Gastrocnemius medialis (tissue), 4 donors: ENCODE measurements at regions of chr18 and their contacts with region 1.

Region 1: DNA sequence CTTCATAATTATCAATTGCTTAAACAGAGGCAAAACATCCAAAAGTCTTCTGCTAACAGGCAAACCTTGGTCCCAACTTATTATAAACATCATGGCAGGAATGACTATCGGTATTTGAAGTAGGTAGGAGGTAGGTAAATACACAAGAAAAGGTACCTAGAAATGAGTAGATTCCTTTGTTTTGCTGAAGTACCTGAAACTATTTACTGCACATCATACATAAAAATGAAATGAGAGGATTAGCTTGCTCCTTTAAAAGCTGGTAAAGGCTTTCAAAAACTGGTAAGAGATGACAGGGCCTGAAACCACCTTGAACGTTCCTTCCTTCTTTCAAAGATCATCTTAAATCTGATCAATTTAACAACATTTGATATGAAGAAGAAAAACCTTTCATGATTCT is 55.2 kb upstream of the MAPRE2 start:
- DNase-seq: no peak
- ATAC-seq: no peak
- H3K4me3 ChIP-seq: no peak overlapping the region
- H3K27ac ChIP-seq: peak overlapping the region; percentile 19 to 81 (median 34)
- H3K4me1 ChIP-seq: peaks cover 11 to 20% of the 10 kb centered on the region in 2 donors
- H3K27me3 ChIP-seq: no peaks in the 10 kb centered on the region
- CTCF ChIP-seq: no peak
- POLR2A ChIP-seq: no peak

Region 2: GRCh38 chr18:34880882-34881834 is 104.8 kb before region 1 on chr18:
- in situ Hi-C with region 1: no loop called
- intact Hi-C with region 1: loop called (anchors 5 kb)
- DNase-seq: peak; percentile 49 to 72
- ATAC-seq: peak; percentile 94 to 95
- H3K4me3 ChIP-seq: peak overlapping the region in 2 of 4 donors; percentile 8 to 15
- H3K27ac ChIP-seq: peak overlapping the region; percentile 84 to 88 (median 86)
- H3K4me1 ChIP-seq: peaks cover 20 to 33% of the 10 kb centered on the region in 2 donors
- H3K27me3 ChIP-seq: no peaks in the 10 kb centered on the region
- CTCF ChIP-seq: peak in 4 of 5 experiments; percentile 17 to 46 (median 36)
- POLR2A ChIP-seq: peak in 1 of 2 donors; percentile 36

Region 3: DNA sequence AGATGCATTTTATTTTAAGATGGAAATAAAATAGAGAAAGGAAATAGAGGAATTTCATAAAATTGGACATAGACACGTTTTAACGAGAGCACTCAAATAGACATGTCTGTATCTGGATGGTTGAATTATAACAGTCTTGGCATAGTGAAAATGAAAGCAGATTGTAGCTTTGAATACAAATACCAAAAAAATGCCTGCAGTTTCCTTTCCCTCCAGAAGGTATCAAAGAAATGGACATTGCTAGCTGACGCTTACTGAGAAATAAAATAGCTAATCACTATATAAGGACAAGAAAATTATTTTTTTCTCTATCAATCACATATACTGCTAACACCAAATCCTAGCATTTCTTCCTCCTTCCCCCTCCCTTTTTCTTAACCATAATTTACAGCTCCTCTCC is 43.8 kb after region 1 on chr18:
- in situ Hi-C with region 1: no loop called
- intact Hi-C with region 1: no loop called
- DNase-seq: no peak
- ATAC-seq: peak in 1 of 2 donors; percentile 18
- H3K4me3 ChIP-seq: peak overlapping the region; percentile 5 to 45 (median 32)
- H3K27ac ChIP-seq: peak overlapping the region; percentile 15 to 63 (median 51)
- H3K4me1 ChIP-seq: peaks cover 40 to 47% of the 10 kb centered on the region in 2 donors
- H3K27me3 ChIP-seq: no peaks in the 10 kb centered on the region
- CTCF ChIP-seq: no peak
- POLR2A ChIP-seq: no peak